ENCODE measurements at regions of chr2 and their contacts with region 1.

Region 1: DNA sequence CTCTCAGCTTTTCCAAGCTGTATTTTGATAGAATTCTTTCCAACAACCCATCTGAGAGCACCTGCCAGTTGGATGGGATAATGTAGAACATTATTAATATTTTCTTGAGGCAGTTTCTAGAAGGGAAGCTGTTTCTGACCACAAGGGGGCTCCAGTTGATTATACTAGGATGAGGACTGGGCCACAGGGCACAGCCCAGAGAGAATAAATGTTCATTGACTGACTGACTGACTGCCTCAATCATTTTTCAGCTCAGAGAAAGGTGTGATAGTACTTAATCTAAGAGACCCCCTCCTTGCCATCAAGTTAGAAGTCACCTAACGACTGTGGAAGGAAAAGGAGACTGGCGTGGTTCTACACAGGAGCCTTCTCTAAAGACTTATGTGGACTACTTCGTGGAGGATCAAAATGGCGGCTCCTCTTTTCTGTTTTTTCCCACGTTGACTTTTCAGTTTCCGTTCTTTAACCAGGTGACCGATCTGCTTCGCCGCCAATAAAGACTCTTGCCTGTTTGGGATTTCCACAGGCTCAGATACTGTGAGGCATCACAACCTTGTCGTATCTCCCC is 31.9 kb upstream of the CREG2 start:
- DNase-seq: peak; percentile 27
- H3K4me3 ChIP-seq: no peak overlapping the region
- H3K27ac ChIP-seq: no peak overlapping the region
- H3K27me3 ChIP-seq: no peaks in the 10 kb centered on the region
- CTCF ChIP-seq: peak; percentile 86

Region 2: DNA sequence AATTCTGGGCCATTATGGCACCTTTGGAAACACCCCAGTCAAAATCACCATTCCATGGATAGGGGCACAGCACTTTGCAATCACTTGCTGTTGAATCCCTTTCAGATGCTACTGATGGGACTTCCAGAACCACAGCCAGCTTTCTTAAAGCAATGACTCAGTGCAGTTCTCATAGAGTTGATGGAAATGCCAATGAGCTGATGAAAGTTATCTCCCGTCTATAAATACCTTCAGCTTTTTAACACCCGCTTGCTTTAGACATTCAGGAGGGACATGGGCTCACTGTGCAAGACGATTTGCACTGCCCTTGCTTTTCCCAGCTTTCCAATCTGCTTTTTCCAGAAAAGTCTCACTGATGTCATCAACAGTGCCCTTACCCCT is 483.8 kb before region 1 on chr2:
- CTCF ChIA-PET with region 1: no interaction called
- POLR2A ChIA-PET with region 1: no interaction called
- DNase-seq: peak; percentile 26
- H3K4me3 ChIP-seq: no peak overlapping the region
- H3K27ac ChIP-seq: no peak overlapping the region
- H3K27me3 ChIP-seq: no peaks in the 10 kb centered on the region
- CTCF ChIP-seq: no peak

Region 3: GRCh38 chr2:101145406-101145805 is 273.8 kb before region 1 on chr2:
- CTCF ChIA-PET with region 1: no interaction called
- POLR2A ChIA-PET with region 1: no interaction called
- DNase-seq: no peak
- H3K4me3 ChIP-seq: no peak overlapping the region
- H3K27ac ChIP-seq: no peak overlapping the region
- H3K27me3 ChIP-seq: peaks cover 17% of the 10 kb centered on the region
- CTCF ChIP-seq: no peak

Region 4: DNA sequence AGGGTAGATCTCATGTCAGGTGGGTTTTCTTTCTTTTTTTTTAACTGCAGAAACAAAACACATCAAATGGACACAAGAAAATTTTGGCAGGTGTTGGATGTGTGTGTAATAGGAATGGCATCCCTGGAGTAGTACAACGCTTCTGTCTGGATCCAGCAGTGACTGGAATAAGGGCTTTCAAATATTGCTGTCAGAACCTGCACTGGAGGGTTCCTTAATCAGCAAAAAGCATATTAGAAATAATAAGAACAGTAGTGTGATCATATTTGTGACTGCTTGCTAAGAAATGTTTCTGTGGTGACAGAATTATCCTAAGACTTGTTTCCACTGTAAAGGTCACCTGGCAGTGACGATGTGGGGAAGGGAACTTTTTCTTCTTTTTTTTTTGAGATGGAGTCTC is 62.7 kb before region 1 on chr2:
- CTCF ChIA-PET with region 1: no interaction called
- POLR2A ChIA-PET with region 1: no interaction called
- DNase-seq: no peak
- H3K4me3 ChIP-seq: no peak overlapping the region
- H3K27ac ChIP-seq: no peak overlapping the region
- H3K27me3 ChIP-seq: peaks cover 5% of the 10 kb centered on the region
- CTCF ChIP-seq: no peak

Region 5: DNA sequence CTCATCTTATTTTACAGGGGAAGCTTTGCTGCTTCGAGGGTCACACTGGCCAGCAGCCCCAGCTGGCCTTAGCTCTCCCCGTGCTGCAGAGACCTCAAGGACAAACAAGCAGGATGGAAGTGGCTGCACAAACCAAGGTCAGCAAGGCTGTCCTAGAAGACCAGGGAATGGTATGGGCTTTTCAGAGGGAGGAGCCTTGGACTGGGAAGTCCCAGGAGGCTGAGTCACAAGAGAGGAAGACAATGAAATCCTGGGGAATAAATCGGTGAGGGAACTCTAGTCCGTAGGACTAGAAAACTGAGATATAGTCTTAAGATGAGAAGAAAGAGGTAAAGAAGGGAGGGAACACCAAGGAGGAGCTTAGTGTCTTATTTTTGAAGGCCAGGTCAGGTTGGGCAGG is 47.5 kb before region 1 on chr2:
- CTCF ChIA-PET with region 1: no interaction called
- POLR2A ChIA-PET with region 1: no interaction called
- DNase-seq: no peak
- H3K4me3 ChIP-seq: no peak overlapping the region
- H3K27ac ChIP-seq: no peak overlapping the region
- H3K27me3 ChIP-seq: peaks cover 7% of the 10 kb centered on the region
- CTCF ChIP-seq: no peak

Region 6: GRCh38 chr2:101432411-101433181 is 13.4 kb after region 1 on chr2:
- CTCF ChIA-PET with region 1: interaction called, 11 read pairs
- POLR2A ChIA-PET with region 1: no interaction called
- DNase-seq: no peak
- H3K4me3 ChIP-seq: no peak overlapping the region
- H3K27ac ChIP-seq: no peak overlapping the region
- H3K27me3 ChIP-seq: no peaks in the 10 kb centered on the region
- CTCF ChIP-seq: no peak

Region 7: DNA sequence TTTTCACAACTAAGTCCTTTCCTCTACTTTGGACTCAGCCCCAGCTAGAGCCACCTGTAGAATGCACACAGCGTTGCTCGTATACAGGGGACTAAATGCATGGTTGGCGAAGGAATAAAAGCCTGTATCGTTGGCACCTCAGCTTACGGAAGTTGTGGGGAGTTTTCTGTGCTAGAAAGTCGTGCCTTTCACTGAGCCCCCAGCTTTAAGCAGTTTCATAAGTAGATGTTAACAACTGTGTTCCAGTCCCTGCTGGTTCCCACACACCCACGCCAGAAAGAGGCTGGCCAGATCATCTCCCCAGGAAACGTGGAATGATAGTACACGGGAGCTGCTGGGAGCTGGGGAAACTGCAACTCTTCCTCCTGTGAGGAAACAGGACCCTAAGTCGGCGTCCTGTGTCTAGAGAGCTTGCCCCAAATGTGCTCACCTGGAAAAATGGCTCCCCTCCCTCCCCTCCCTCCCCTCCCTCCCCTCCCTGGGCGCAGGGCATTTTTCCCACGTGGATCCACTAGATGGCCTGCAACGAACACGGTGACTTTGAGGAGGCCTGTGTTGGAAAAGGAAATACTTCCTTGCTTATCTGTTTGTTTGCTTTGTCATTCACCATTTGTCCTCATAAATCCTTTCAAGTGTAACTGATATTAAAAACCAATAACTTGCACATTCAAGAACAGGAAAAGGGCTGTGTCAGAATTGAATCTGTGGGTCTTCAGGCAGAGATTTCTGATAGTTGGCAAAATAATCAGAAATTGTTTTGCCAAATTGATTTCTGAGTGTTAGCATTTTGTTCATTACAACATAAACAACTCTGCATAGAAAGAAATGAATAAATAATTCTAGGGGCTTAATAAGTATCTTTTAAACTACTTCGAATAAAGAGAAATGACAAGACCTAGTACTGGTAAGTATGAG is 99.7 kb after region 1 on chr2:
- CTCF ChIA-PET with region 1: interaction called, 10 read pairs
- POLR2A ChIA-PET with region 1: no interaction called
- DNase-seq: no peak
- H3K4me3 ChIP-seq: no peak overlapping the region
- H3K27ac ChIP-seq: peak overlapping the region; percentile 66
- H3K27me3 ChIP-seq: no peaks in the 10 kb centered on the region
- CTCF ChIP-seq: peak; percentile 43

Region 8: GRCh38 chr2:101697124-101698013 is 278.2 kb after region 1 on chr2 and contains the start of gene MAP4K4:
- CTCF ChIA-PET with region 1: interaction called, 13 read pairs
- POLR2A ChIA-PET with region 1: no interaction called
- DNase-seq: peak; percentile 49
- H3K4me3 ChIP-seq: peak within 1 kb of the TSS; percentile 85
- H3K27ac ChIP-seq: peak within 1 kb of the TSS; percentile 65
- H3K27me3 ChIP-seq: no peaks in the 10 kb centered on the region
- CTCF ChIP-seq: peak; percentile 38
- polyA plus RNA-seq, gene MAP4K4: 152 and 158 TPM in 2 replicates

Region 9: GRCh38 chr2:101841679-101842327 is 422.6 kb after region 1 on chr2:
- CTCF ChIA-PET with region 1: interaction called, 15 read pairs
- POLR2A ChIA-PET with region 1: no interaction called
- DNase-seq: no peak
- H3K4me3 ChIP-seq: no peak overlapping the region
- H3K27ac ChIP-seq: no peak overlapping the region
- H3K27me3 ChIP-seq: no peaks in the 10 kb centered on the region
- CTCF ChIP-seq: no peak